ENCODE measurements at regions of chr21 and their contacts with region 1.

Region 1: GRCh38 chr21:36854391-36854790 is 112.1 kb downstream of the HLCS start:
- DNase-seq: peak; percentile 47
- H3K4me3 ChIP-seq: no peak overlapping the region
- H3K27ac ChIP-seq: no peak overlapping the region
- H3K4me1 ChIP-seq: peaks cover 4% of the 10 kb centered on the region
- H3K27me3 ChIP-seq: no peaks in the 10 kb centered on the region
- CTCF ChIP-seq: peak; percentile 64 to 68
- POLR2A ChIP-seq: no peak

Region 2: GRCh38 chr21:36698981-36699891 is 155.2 kb before region 1 on chr21 and contains the start of gene SIM2:
- CTCF ChIA-PET with region 1: no interaction called
- POLR2A ChIA-PET with region 1: no interaction called
- dilution Hi-C with region 1: no loop called
- intact Hi-C with region 1: loop called (anchors 5 kb)
- DNase-seq: no peak
- H3K4me3 ChIP-seq: peak within 1 kb of the TSS in 1 of 3 experiments; percentile 6
- H3K27ac ChIP-seq: no peak within 1 kb of the TSS
- H3K4me1 ChIP-seq: peaks cover 23% of the 10 kb centered on the region
- H3K27me3 ChIP-seq: peaks cover 88 to 98% of the 10 kb centered on the region in 2 experiments
- CTCF ChIP-seq: no peak
- POLR2A ChIP-seq: no peak
- total RNA-seq, gene SIM2: not detected in 2 replicates

Region 3: DNA sequence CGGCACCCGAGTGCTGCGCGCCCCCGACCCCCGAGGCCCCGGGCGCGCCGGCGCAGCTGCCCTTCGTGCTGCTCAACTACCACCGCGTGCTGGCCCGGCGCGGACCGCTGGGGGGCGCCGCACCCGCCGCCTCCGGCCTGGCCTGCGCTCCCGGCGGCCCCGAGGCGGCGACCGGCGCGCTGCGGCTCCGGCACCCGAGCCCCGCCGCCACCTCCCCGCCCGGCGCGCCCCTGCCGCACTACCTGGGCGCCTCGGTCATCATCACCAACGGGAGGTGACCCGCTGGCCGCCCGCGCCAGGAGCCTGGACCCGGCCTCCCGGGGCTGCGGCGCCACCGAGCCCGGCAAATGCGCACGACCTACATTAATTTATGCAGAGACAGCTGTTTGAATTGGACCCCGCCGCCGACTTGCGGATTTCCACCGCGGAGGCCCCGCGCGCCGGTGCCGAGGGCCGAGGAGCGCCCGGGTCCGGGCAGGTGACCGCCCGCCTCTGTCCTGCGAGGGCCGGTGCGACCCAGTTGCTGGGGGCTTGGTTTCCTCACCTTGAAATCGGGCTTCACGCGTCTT is 106.5 kb before region 1 on chr21:
- CTCF ChIA-PET with region 1: interaction called, 25 read pairs
- POLR2A ChIA-PET with region 1: no interaction called
- dilution Hi-C with region 1: no loop called
- intact Hi-C with region 1: loop called (anchors 1 kb)
- DNase-seq: peak; percentile 35
- H3K4me3 ChIP-seq: peak overlapping the region; percentile 16 to 37 (median 16)
- H3K27ac ChIP-seq: no peak overlapping the region
- H3K4me1 ChIP-seq: peaks cover 7% of the 10 kb centered on the region
- H3K27me3 ChIP-seq: peaks cover 0 to 8% of the 10 kb centered on the region in 2 experiments
- CTCF ChIP-seq: peak; percentile 20 to 39
- POLR2A ChIP-seq: no peak

Measured in endothelial cell of umbilical vein (primary cell).